GM13977 (cell line): ENCODE measurements at regions of chr4 and their contacts with region 1.

Region 1: DNA sequence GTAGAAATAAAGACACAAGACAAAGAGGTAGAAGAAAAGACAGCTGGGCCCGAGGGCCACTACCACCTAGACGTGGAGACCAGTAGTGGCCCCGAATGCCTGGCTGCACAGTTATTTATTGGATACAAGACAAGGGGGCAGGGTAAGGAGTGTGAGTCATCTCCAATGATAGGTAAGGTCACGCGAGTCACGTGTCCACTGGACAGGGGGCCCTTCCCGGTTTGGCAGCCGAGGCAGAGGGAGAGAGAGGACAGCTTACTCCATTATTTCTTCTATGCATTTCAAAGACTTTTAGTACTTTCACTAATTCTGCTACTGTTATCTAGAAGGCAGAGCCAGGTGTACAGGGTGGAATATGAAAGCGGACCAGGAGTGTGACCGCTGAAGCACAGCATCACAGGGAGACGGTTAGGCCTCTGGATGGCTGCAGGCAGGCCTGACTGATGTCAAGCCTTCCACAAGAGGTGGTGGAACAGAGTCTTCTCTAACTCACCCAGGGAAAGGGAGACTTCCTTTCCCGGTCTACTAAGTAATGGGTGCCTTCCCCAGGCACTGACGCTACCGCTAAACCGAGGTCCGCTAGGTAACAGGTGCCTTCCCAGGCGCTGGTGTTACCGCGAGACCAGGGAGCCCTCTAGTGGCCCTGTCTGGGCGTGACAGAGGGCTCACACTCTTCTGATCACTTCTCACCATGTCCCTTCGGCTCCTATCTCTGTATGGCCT is 44.9 kb downstream of the ZBTB49 start:
- DNase-seq: peak; percentile 62
- CTCF ChIP-seq: peak; percentile 95

Region 2: GRCh38 chr4:4256799-4257198 is 78.2 kb before region 1 on chr4:
- in situ Hi-C with region 1: loop called (anchors 10 kb)
- DNase-seq: no peak
- CTCF ChIP-seq: no peak

Region 3: DNA sequence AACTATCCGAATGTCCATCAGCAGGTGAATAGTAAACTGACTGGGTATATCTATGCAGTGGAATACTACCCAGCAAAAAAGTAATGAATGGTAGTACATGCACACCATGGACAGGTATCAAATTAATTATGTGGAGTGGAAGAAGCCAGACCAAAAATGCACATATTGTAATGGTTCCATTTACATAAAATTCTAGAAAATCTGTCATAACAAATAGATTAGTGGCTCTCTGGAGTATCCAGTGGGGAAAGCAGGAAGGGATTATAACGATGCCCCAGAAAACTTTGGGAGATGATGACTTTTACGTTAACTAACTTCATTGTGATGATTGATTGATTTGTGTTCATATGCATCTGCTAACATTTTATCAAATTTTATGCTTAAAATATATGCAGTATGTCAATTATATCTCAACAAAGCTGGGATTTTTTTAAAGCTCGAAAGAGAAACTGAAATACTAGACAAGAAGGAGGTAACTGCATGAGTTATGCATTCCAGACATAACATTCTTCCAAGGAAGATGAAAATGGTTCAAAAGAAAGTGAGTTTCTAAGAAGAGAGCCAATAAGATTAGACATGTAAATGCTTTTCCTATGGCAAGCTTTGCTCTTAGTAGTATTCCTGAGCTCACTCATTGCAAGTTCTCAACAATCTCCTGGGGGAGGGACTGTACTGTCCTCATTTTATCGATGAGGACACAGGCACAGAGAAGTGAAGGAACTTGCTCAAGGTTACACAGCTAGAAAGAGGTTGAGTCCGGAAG is 465.9 kb after region 1 on chr4:
- in situ Hi-C with region 1: no loop called
- DNase-seq: no peak
- CTCF ChIP-seq: no peak

Region 4: GRCh38 chr4:5127556-5127955 is 792.6 kb after region 1 on chr4:
- in situ Hi-C with region 1: no loop called
- DNase-seq: no peak
- CTCF ChIP-seq: no peak